ENCODE measurements at regions of chr11 and their contacts with region 1.

Region 1: GRCh38 chr11:11022125-11022730 is 164.4 kb upstream of the ZBED5 start:
- DNase-seq: no peak
- H3K4me3 ChIP-seq: no peak overlapping the region
- H3K27ac ChIP-seq: no peak overlapping the region
- H3K27me3 ChIP-seq: peaks cover 12% of the 10 kb centered on the region
- CTCF ChIP-seq: peak; percentile 52

Region 2: GRCh38 chr11:10770626-10771254 is 251.5 kb before region 1 on chr11:
- CTCF ChIA-PET with region 1: interaction called, 19 read pairs
- POLR2A ChIA-PET with region 1: no interaction called
- DNase-seq: no peak
- H3K4me3 ChIP-seq: no peak overlapping the region
- H3K27ac ChIP-seq: no peak overlapping the region
- H3K27me3 ChIP-seq: no peaks in the 10 kb centered on the region
- CTCF ChIP-seq: peak; percentile 87

Region 3: GRCh38 chr11:10792398-10792975 is 229.7 kb before region 1 on chr11:
- CTCF ChIA-PET with region 1: interaction called, 21 read pairs
- POLR2A ChIA-PET with region 1: no interaction called
- DNase-seq: peak; percentile 32
- H3K4me3 ChIP-seq: peak overlapping the region; percentile 30; the same call in 1 of the 2 replicates
- H3K27ac ChIP-seq: no peak overlapping the region
- H3K27me3 ChIP-seq: no peaks in the 10 kb centered on the region
- CTCF ChIP-seq: peak; percentile 85

Region 4: DNA sequence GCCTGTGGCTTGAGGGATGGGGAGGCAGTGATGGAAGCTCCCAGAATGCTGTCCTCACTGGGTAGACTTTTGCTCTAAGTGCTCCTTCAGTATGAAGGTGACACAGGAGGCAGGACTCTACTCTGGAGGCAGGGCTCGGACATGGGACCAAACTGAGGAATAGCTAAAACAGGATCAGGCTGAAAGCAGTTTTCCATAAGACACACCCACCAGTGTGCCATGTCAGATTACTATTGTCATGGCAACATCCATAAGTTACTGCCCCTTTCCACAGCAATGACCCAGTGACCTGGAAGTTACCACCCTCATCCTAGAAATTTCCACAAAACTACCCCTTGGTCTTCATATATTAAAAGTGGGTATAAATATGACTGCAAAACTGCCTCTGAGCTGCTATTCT is 643.2 kb after region 1 on chr11:
- CTCF ChIA-PET with region 1: interaction called, 11 read pairs
- POLR2A ChIA-PET with region 1: no interaction called
- DNase-seq: no peak
- H3K4me3 ChIP-seq: no peak overlapping the region
- H3K27ac ChIP-seq: no peak overlapping the region
- H3K27me3 ChIP-seq: peaks cover 45% of the 10 kb centered on the region
- CTCF ChIP-seq: no peak